T-cell (primary cell): ENCODE measurements at regions of chr21 and their contacts with region 1.

Region 1: DNA sequence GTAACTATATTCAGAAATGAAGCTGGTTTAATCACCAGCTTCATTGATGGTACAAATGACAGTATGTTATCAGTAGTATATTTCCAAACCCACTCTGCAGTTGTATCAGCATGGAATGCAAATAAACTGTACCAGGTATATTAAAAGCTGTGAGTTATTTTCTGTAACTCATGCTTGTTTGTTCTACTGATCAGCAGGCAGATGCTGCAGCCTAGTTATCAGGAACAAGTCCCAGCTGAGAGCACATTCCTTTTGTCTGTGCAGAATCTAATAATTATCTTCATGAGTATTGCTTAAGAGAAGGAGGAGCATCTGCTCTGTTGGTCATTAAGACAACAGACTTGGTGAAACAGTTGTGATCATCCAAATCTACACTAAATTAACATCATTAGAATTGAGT is 1331.1 kb downstream of the MRPL39 start:
- DNase-seq: no peak
- ATAC-seq: no peak
- H3K4me3 ChIP-seq: no peak overlapping the region
- H3K4me3 Mint-ChIP-seq: no peak overlapping the region
- H3K27ac ChIP-seq: no peak overlapping the region
- H3K27ac Mint-ChIP-seq: no peak overlapping the region
- H3K4me1 ChIP-seq: no peaks in the 10 kb centered on the region
- H3K4me1 Mint-ChIP-seq: peaks cover 0 to 6% (median 0%) of the 10 kb centered on the region in 3 donors
- H3K27me3 ChIP-seq: no peaks in the 10 kb centered on the region
- H3K27me3 Mint-ChIP-seq: no peaks in the 10 kb centered on the region

Region 2: GRCh38 chr21:24014381-24014780 is 261.8 kb before region 1 on chr21:
- CTCF ChIA-PET with region 1: no interaction called
- POLR2A ChIA-PET with region 1: no interaction called
- DNase-seq: no peak
- ATAC-seq: no peak
- H3K4me3 ChIP-seq: no peak overlapping the region
- H3K4me3 Mint-ChIP-seq: no peak overlapping the region
- H3K27ac ChIP-seq: no peak overlapping the region
- H3K27ac Mint-ChIP-seq: no peak overlapping the region
- H3K4me1 ChIP-seq: no peaks in the 10 kb centered on the region
- H3K4me1 Mint-ChIP-seq: no peaks in the 10 kb centered on the region
- H3K27me3 ChIP-seq: no peaks in the 10 kb centered on the region
- H3K27me3 Mint-ChIP-seq: no peaks in the 10 kb centered on the region

Region 3: DNA sequence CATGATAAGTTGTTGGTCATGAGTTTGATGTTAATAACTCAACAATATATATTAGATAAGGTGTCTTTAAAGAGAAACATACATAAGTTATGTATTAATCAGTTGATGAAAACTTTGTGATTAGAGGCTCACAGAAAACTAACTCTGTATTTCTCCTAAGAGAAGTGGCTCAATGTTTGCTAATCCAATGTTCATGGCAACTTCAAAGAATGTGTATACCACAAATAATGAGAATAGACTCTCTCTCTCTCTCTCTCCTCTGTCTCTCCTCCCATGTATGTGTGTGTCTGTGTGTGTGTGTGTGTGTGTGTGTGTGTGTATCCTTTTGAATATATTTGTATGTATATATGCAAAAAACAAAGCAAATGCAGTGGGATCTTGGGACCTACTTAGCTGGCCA is 26.2 kb after region 1 on chr21:
- CTCF ChIA-PET with region 1: no interaction called
- POLR2A ChIA-PET with region 1: interaction called in 1 of 2 experiments, 12 read pairs
- DNase-seq: no peak
- ATAC-seq: no peak
- H3K4me3 ChIP-seq: no peak overlapping the region
- H3K4me3 Mint-ChIP-seq: no peak overlapping the region
- H3K27ac ChIP-seq: no peak overlapping the region
- H3K27ac Mint-ChIP-seq: no peak overlapping the region
- H3K4me1 ChIP-seq: peaks cover 0 to 2% of the 10 kb centered on the region in 2 experiments
- H3K4me1 Mint-ChIP-seq: peaks cover 0 to 8% (median 0%) of the 10 kb centered on the region in 3 donors
- H3K27me3 ChIP-seq: no peaks in the 10 kb centered on the region
- H3K27me3 Mint-ChIP-seq: no peaks in the 10 kb centered on the region

Region 4: DNA sequence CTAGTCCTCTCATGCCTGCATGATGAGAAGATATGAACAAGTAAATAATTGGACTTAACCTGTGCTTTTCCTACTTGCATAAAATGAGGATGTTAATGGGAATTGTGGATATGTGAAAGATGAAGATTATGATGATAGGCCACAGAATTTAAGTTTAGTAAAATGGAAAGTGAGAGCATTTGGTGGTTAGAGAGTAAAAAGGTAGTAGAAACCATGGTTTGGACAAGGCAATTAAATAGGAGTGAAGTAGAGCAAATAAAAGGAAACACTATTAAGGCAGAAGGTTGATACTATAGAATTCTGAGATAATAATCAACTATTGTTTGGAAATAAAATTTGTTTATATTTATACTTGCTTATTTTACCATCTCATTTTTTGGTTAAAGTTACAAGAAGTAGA is 168.5 kb after region 1 on chr21:
- CTCF ChIA-PET with region 1: no interaction called
- POLR2A ChIA-PET with region 1: no interaction called
- DNase-seq: no peak
- ATAC-seq: no peak
- H3K4me3 ChIP-seq: no peak overlapping the region
- H3K4me3 Mint-ChIP-seq: no peak overlapping the region
- H3K27ac ChIP-seq: no peak overlapping the region
- H3K27ac Mint-ChIP-seq: no peak overlapping the region
- H3K4me1 ChIP-seq: no peaks in the 10 kb centered on the region
- H3K4me1 Mint-ChIP-seq: no peaks in the 10 kb centered on the region
- H3K27me3 ChIP-seq: no peaks in the 10 kb centered on the region
- H3K27me3 Mint-ChIP-seq: no peaks in the 10 kb centered on the region